ENCODE measurements at regions of chr1 and their contacts with region 1.

Region 1: DNA sequence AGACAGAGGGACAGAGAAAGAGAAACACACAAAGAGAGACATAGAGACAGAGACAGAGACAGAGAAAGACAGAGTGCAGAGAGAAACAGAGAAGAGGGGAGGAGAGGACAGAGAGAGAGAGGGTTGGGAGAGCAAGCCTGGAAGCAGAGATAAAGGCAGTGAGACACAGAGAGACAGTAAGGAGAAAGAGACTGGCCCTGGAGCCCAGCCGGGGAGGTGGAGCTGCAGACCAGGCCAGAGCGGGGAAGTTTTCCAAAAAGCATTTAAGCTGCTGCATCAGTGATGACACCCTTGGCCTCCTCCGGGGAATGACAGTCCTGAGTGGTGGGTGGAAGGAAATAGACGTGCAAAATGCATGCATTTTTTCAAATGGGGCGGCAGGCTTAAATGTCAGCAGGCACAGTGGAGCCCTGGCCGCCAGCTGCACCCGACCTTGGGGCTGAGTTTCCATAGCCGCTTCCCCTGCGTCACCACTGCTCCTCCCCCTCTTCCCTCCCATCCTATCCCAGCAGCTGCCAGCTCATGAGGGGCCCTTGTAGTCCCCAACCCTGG is 95.4 kb upstream of the KLHDC7A start:
- DNase-seq: peak; percentile 44
- ATAC-seq: peak; percentile 85
- H3K4me3 Mint-ChIP-seq: peak overlapping the region; percentile 0; the same call in 1 of the 2 replicates
- H3K27ac Mint-ChIP-seq: peak overlapping the region; percentile 0; the same call in 1 of the 2 replicates
- H3K4me1 Mint-ChIP-seq: peaks cover 30% of the 10 kb centered on the region
- H3K27me3 Mint-ChIP-seq: peaks cover 49% of the 10 kb centered on the region
- CTCF ChIP-seq: no peak

Region 2: GRCh38 chr1:18360251-18360650 is 25.1 kb before region 1 on chr1:
- CTCF ChIA-PET with region 1: no interaction called
- POLR2A ChIA-PET with region 1: no interaction called
- DNase-seq: no peak
- ATAC-seq: no peak
- H3K4me3 Mint-ChIP-seq: no peak overlapping the region
- H3K27ac Mint-ChIP-seq: no peak overlapping the region
- H3K4me1 Mint-ChIP-seq: peaks cover 13% of the 10 kb centered on the region
- H3K27me3 Mint-ChIP-seq: peaks cover 2% of the 10 kb centered on the region; the same call in 1 of the 2 replicates
- CTCF ChIP-seq: no peak

Region 3: GRCh38 chr1:18373882-18374493 is 11.3 kb before region 1 on chr1:
- CTCF ChIA-PET with region 1: interaction called, 13 read pairs
- POLR2A ChIA-PET with region 1: no interaction called
- DNase-seq: peak; percentile 93
- ATAC-seq: peak; percentile 95
- H3K4me3 Mint-ChIP-seq: no peak overlapping the region
- H3K27ac Mint-ChIP-seq: no peak overlapping the region
- H3K4me1 Mint-ChIP-seq: peaks cover 13% of the 10 kb centered on the region
- H3K27me3 Mint-ChIP-seq: peaks cover 16% of the 10 kb centered on the region
- CTCF ChIP-seq: peak; percentile 77

Region 4: GRCh38 chr1:18429654-18430053 is 44.3 kb after region 1 on chr1:
- CTCF ChIA-PET with region 1: no interaction called
- POLR2A ChIA-PET with region 1: no interaction called
- DNase-seq: no peak
- ATAC-seq: no peak
- H3K4me3 Mint-ChIP-seq: no peak overlapping the region
- H3K27ac Mint-ChIP-seq: no peak overlapping the region
- H3K4me1 Mint-ChIP-seq: peaks cover 8% of the 10 kb centered on the region
- H3K27me3 Mint-ChIP-seq: peaks cover 11% of the 10 kb centered on the region
- CTCF ChIP-seq: no peak